CD8-positive, alpha-beta T cell (primary cell): ENCODE measurements at regions of chr3 and their contacts with region 1.

Region 1: DNA sequence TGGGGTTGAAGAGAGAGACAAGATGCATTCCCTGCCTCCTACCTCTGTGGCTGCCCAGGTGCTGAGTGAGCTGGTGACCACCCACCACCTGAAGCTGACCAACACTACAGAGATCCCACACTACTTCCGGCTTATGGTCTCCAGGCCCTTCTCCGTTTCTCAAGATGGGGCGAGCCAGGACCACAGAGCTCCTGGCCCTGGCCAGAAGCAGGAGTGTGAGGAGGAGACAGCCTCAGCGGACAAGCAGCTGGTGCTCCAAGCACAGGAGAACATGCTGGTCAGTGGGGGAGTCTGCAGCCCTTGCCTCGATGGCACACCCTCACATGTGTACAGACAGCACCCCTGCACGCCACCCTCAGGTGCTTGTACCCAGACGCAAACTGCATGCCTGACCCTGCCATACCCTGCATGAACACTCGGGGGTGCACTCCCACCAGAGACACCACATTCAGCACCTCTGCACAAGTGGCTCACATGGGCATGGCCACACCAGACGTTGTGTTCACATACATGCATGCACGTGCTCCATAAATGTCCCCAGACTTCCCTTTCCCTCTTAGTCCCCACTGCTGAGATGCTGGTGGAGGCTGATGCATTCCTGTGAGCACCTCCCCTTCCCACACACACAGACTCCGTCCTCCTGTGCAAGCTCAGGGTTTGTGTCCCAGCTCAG is 19.0 kb downstream of the ACAA1 start:
- DNase-seq: peak; percentile 60 to 81 (median 75)
- ATAC-seq: peak; percentile 99
- H3K4me3 ChIP-seq: no peak overlapping the region
- H3K4me3 Mint-ChIP-seq: no peak overlapping the region
- H3K27ac ChIP-seq: no peak overlapping the region
- H3K27ac Mint-ChIP-seq: no peak overlapping the region
- H3K4me1 ChIP-seq: no peaks in the 10 kb centered on the region
- H3K4me1 Mint-ChIP-seq: peaks cover 6% of the 10 kb centered on the region
- H3K27me3 ChIP-seq: no peaks in the 10 kb centered on the region
- H3K27me3 Mint-ChIP-seq: no peaks in the 10 kb centered on the region
- CTCF ChIP-seq: peak; percentile 73

Region 2: DNA sequence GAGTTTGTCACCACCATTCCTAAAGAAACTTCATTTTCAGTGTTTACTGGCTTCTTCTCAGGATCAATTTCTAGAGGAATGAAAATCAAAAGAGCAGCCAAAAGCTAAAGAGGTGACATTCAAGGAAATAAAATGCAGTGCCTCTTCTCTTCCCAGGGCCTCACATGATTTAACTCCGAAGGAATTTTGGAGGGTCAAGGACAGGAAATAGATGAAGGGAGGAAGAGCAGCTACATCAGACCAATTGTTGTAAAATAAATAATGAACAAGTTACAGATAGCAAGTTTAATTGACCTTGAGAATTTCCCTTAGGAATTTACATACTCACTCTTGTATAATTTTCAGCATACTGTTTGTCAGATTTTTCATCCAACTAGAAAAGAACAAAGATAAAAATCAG is 1021.6 kb before region 1 on chr3:
- CTCF ChIA-PET with region 1: no interaction called
- POLR2A ChIA-PET with region 1: no interaction called
- intact Hi-C with region 1: no loop called
- DNase-seq: no peak
- ATAC-seq: no peak
- H3K4me3 ChIP-seq: no peak overlapping the region
- H3K4me3 Mint-ChIP-seq: no peak overlapping the region
- H3K27ac ChIP-seq: no peak overlapping the region
- H3K27ac Mint-ChIP-seq: no peak overlapping the region
- H3K4me1 ChIP-seq: no peaks in the 10 kb centered on the region
- H3K4me1 Mint-ChIP-seq: no peaks in the 10 kb centered on the region
- H3K27me3 ChIP-seq: no peaks in the 10 kb centered on the region
- H3K27me3 Mint-ChIP-seq: no peaks in the 10 kb centered on the region
- CTCF ChIP-seq: no peak

Region 3: DNA sequence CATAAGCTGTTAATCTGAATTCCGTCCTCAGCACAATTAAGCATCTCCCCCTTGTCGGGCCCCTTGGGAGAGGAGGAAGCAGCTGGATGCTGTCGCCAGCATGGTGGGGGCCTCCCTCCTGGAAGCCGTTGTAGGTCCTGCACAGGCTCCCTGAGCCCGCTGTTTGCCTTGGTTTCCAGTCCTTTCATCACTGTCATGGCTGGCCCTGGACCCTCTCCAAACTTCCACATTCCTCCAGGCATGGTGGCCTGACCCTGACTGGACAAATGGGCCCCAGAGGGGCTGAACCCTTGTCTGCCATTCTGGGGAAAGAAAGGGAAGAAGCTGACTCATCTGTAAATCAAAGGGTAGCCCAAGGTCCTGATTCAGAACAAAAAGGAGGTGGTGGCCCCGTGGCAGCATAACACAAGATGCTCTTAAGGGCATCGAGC is 643.0 kb before region 1 on chr3:
- CTCF ChIA-PET with region 1: no interaction called
- POLR2A ChIA-PET with region 1: no interaction called
- intact Hi-C with region 1: no loop called
- DNase-seq: no peak
- ATAC-seq: no peak
- H3K4me3 ChIP-seq: no peak overlapping the region
- H3K4me3 Mint-ChIP-seq: no peak overlapping the region
- H3K27ac ChIP-seq: no peak overlapping the region
- H3K27ac Mint-ChIP-seq: no peak overlapping the region
- H3K4me1 ChIP-seq: no peaks in the 10 kb centered on the region
- H3K4me1 Mint-ChIP-seq: no peaks in the 10 kb centered on the region
- H3K27me3 ChIP-seq: no peaks in the 10 kb centered on the region
- H3K27me3 Mint-ChIP-seq: peaks cover 17% of the 10 kb centered on the region
- CTCF ChIP-seq: no peak

Region 4: DNA sequence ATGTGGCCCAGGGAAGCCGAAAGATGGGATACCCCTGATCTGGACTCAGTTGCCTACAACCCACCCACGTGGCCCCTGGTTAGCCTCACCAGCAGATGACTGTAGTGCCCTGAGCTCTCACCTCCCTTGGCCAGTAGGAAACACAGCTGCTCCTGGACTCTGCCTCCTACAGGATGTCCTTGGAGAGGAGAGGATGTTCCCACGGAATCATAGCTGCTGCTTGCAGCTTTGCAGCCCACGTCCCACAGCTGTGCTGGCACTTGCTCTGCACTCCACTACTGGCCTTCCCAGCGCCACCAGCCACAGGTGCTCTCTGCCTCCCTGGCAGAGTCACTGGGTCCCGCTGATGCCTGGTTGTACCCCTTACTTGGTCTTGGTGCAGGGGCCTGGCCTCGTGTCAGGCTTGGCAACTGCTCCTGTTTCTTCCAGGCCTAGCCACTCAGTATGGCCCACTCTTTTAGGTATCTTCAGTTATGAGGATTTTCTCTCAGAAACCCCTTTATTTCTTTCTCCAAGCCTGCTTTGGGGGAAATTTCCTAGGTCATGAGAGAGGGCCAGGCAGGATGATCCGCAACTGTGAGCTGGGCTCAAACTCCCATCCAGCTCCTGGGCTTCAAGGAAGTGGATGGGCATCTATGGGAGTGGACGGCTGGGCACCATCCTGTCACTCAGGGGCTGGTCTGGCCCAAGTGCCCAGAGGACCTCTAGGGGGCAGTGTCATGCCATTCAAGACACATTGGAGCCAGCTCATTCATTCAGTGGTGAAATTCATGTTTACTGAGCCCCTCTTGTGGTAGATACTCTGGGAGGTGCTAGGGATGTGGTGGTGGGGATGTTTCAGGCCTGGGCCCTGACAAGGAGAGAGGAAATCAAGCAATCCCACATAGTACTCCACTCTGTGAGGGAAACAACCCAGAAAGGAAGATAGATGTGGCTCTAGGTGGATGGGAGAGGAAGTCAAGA is 143.5 kb before region 1 on chr3:
- CTCF ChIA-PET with region 1: interaction called, 3 read pairs
- POLR2A ChIA-PET with region 1: no interaction called
- intact Hi-C with region 1: loop called in 1 of 2 experiments (anchors 10 kb)
- DNase-seq: peak; percentile 42 to 84 (median 72)
- ATAC-seq: peak; percentile 99
- H3K4me3 ChIP-seq: no peak overlapping the region
- H3K4me3 Mint-ChIP-seq: no peak overlapping the region
- H3K27ac ChIP-seq: no peak overlapping the region
- H3K27ac Mint-ChIP-seq: no peak overlapping the region
- H3K4me1 ChIP-seq: peaks cover 3% of the 10 kb centered on the region
- H3K4me1 Mint-ChIP-seq: peaks cover 4% of the 10 kb centered on the region
- H3K27me3 ChIP-seq: no peaks in the 10 kb centered on the region
- H3K27me3 Mint-ChIP-seq: no peaks in the 10 kb centered on the region
- CTCF ChIP-seq: peak; percentile 82

Region 5: GRCh38 chr3:38227989-38228388 is 110.1 kb after region 1 on chr3:
- CTCF ChIA-PET with region 1: interaction called, 3 read pairs
- POLR2A ChIA-PET with region 1: no interaction called
- intact Hi-C with region 1: loop called in 1 of 2 experiments (anchors 5 kb)
- DNase-seq: no peak
- ATAC-seq: no peak
- H3K4me3 ChIP-seq: no peak overlapping the region
- H3K4me3 Mint-ChIP-seq: no peak overlapping the region
- H3K27ac ChIP-seq: no peak overlapping the region
- H3K27ac Mint-ChIP-seq: no peak overlapping the region
- H3K4me1 ChIP-seq: no peaks in the 10 kb centered on the region
- H3K4me1 Mint-ChIP-seq: no peaks in the 10 kb centered on the region
- H3K27me3 ChIP-seq: no peaks in the 10 kb centered on the region
- H3K27me3 Mint-ChIP-seq: no peaks in the 10 kb centered on the region
- CTCF ChIP-seq: no peak

Region 6: GRCh38 chr3:38297947-38298711 is 180.2 kb after region 1 on chr3:
- CTCF ChIA-PET with region 1: interaction called, 13 read pairs
- POLR2A ChIA-PET with region 1: no interaction called
- intact Hi-C with region 1: loop called in 1 of 2 experiments (anchors 5 kb)
- DNase-seq: peak in 1 of 9 experiments; percentile 23
- ATAC-seq: no peak
- H3K4me3 ChIP-seq: no peak overlapping the region
- H3K4me3 Mint-ChIP-seq: no peak overlapping the region
- H3K27ac ChIP-seq: no peak overlapping the region
- H3K27ac Mint-ChIP-seq: no peak overlapping the region
- H3K4me1 ChIP-seq: no peaks in the 10 kb centered on the region
- H3K4me1 Mint-ChIP-seq: no peaks in the 10 kb centered on the region
- H3K27me3 ChIP-seq: no peaks in the 10 kb centered on the region
- H3K27me3 Mint-ChIP-seq: no peaks in the 10 kb centered on the region
- CTCF ChIP-seq: peak; percentile 48

Region 7: GRCh38 chr3:38651154-38651789 is 533.4 kb after region 1 on chr3:
- CTCF ChIA-PET with region 1: no interaction called
- POLR2A ChIA-PET with region 1: no interaction called
- intact Hi-C with region 1: loop called (anchors 5 to 10 kb)
- DNase-seq: peak; percentile 49 to 82 (median 67)
- ATAC-seq: peak; percentile 74
- H3K4me3 ChIP-seq: no peak overlapping the region
- H3K4me3 Mint-ChIP-seq: peak overlapping the region; percentile 52
- H3K27ac ChIP-seq: no peak overlapping the region
- H3K27ac Mint-ChIP-seq: no peak overlapping the region
- H3K4me1 ChIP-seq: peaks cover 21% of the 10 kb centered on the region
- H3K4me1 Mint-ChIP-seq: peaks cover 13% of the 10 kb centered on the region
- H3K27me3 ChIP-seq: peaks cover 7 to 17% of the 10 kb centered on the region in 2 experiments
- H3K27me3 Mint-ChIP-seq: peaks cover 9% of the 10 kb centered on the region
- CTCF ChIP-seq: peak; percentile 96